Activated T-helper 2 cell treated with anti-CD3 and anti-CD28 coated beads, Interferon-gamma antibody, Interleukin-2, Interleukin-4, amounts not matched to agents 10 μg/mL and 5 μg/mL and 100 μg/mL, durations not matched to agents 14 hours and 24 hours and 36 hours (primary cell): ENCODE measurements at regions of chr12 and their contacts with region 1.

Region 1: GRCh38 chr12:124453419-124454351 is 113.7 kb downstream of the NCOR2 start:
- DNase-seq: peak; percentile 76
- H3K4me3 Mint-ChIP-seq: peak overlapping the region; percentile 51
- H3K27ac Mint-ChIP-seq: peak overlapping the region; percentile 67
- H3K4me1 Mint-ChIP-seq: peaks cover 35% of the 10 kb centered on the region
- H3K27me3 Mint-ChIP-seq: no peaks in the 10 kb centered on the region

Region 2: GRCh38 chr12:124388679-124389536 is 64.8 kb before region 1 on chr12:
- intact Hi-C with region 1: loop called (anchors 10 kb)
- DNase-seq: peak; percentile 43
- H3K4me3 Mint-ChIP-seq: peak overlapping the region; percentile 21
- H3K27ac Mint-ChIP-seq: no peak overlapping the region
- H3K4me1 Mint-ChIP-seq: peaks cover 22% of the 10 kb centered on the region
- H3K27me3 Mint-ChIP-seq: no peaks in the 10 kb centered on the region

Region 3: GRCh38 chr12:124441443-124442194 is 12.1 kb before region 1 on chr12:
- intact Hi-C with region 1: no loop called
- DNase-seq: no peak
- H3K4me3 Mint-ChIP-seq: no peak overlapping the region
- H3K27ac Mint-ChIP-seq: no peak overlapping the region
- H3K4me1 Mint-ChIP-seq: no peaks in the 10 kb centered on the region
- H3K27me3 Mint-ChIP-seq: no peaks in the 10 kb centered on the region

Region 4: DNA sequence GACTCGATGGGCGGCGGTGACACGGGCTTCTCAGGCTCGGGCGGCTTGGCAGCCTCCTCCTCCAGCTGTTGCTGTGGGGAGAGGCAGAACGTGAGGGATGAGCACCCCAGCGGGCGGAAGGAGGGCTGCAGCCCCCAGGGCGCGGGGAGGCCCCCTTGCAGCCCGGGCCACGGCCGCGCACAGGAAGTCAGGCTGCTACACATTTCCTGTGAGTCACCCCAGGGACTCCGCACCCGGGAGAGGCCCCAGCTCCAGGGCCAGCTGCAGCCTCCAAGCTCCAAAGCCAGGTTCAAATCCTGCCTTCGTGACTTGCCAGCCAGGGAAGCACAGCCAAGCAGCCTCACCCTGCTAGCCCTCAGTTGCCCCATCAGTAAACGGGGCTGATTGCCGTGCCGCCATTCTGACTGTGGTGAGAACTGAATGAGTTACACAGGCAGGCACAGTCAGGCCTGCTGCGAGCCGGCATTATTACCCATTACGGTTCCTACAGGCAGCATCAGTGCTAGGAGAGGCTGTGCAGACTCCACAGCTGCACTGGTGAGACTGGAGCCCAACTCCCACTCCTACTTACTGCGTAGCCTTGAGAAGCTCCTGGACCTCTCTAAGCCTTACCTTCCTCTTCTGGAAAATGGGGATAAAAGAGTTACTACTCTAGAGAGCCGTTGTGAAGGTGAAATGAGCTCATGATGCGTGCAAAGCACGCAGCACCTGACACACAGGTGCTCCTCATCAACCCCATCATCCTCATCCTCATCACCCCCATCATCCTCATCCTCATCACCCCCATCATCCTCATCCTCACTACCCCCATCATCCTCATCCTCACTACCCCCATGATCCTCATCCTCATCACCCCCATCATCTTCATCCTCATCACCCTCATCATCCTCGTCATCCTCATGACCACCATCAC is 12.8 kb after region 1 on chr12:
- intact Hi-C with region 1: loop called (anchors 1 kb)
- DNase-seq: peak; percentile 83
- H3K4me3 Mint-ChIP-seq: peak overlapping the region; percentile 60
- H3K27ac Mint-ChIP-seq: peak overlapping the region; percentile 74
- H3K4me1 Mint-ChIP-seq: peaks cover 36% of the 10 kb centered on the region
- H3K27me3 Mint-ChIP-seq: no peaks in the 10 kb centered on the region

Region 5: GRCh38 chr12:124493809-124494750 is 40.4 kb after region 1 on chr12:
- intact Hi-C with region 1: loop called (anchors 5 kb)
- DNase-seq: no peak
- H3K4me3 Mint-ChIP-seq: no peak overlapping the region
- H3K27ac Mint-ChIP-seq: peak overlapping the region; percentile 65
- H3K4me1 Mint-ChIP-seq: peaks cover 23% of the 10 kb centered on the region
- H3K27me3 Mint-ChIP-seq: no peaks in the 10 kb centered on the region

Region 6: DNA sequence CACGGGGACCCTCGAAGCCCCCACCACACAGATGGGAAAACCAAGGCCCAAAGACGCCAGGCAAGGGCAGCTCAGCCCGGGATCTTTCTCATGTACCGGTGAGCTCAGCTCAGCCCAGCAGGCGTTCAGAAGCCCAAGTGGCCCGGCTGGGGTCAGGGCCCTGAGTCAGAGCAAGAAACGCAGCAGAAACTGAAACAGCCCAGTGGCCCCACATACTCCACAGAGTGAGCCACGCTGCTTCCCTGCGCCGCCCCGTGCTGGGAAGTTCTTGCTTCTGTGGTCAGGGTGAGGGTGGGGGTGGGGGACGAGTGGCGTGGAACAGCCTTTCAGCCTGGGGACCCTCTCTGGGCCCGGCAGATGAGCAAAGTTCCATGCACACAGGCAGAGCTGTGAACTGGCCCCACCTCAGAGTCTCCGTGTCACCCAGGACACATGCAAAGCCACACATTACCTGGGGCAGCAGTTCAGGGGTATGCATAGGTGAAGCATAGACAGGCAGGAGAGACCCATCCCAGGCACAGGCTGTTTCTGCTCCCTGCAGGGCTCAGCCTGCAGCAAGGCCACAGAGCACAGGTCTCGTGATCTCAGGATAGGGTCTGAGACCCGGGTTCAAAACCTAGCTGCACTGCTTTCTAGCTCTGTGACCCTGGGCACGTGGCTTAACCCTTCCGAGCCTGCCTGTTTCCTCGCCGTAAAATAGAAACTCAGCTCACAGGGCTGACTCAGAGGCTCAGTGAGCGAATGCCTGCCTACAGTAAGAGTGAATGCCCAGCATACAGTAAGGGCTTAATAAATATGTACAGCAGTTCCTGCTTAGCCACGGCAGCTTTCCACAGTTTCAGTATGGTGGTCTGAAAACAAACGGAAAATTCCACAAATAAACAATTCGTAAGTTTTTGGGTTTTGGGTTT is 92.1 kb after region 1 on chr12:
- intact Hi-C with region 1: loop called (anchors 2 kb)
- DNase-seq: peak; percentile 54
- H3K4me3 Mint-ChIP-seq: peak overlapping the region; percentile 42
- H3K27ac Mint-ChIP-seq: no peak overlapping the region
- H3K4me1 Mint-ChIP-seq: peaks cover 41% of the 10 kb centered on the region
- H3K27me3 Mint-ChIP-seq: no peaks in the 10 kb centered on the region

Region 7: DNA sequence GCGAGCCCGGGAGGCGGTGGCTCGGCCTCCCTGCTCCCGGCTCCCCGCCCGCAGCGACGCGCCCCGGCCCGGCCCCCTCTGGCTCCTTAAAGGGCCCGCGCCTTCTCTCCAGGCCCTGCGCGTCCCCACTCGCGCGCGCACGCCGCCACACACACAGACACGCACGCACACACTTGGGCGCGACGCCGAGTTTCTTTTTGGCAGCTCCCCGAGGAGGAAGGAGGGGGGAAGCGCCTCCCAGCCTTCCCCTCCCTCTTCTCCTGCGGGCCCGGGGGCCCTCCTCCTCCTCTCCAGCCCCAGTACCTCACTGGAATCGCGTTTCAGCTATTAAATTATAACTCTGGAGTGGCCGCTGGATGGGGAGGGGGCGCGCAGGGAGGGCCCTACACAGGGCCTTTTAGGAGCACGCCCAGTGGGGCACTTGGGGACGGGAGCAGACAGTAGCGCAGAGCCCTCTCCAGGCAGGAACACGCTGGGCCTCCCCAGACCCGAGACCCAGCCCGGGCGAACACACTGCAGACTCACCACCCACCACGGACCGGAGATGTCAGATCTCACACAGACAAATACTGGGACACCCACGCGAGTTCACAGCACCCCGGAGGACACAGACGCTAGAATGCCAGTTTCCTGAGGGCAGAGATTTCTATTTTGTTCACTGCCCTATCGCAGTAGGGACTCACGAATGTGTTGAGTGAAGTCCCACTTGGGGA is 114.1 kb after region 1 on chr12:
- intact Hi-C with region 1: loop called (anchors 2 kb)
- DNase-seq: peak; percentile 75
- H3K4me3 Mint-ChIP-seq: peak overlapping the region; percentile 78
- H3K27ac Mint-ChIP-seq: peak overlapping the region; percentile 78
- H3K4me1 Mint-ChIP-seq: peaks cover 10% of the 10 kb centered on the region
- H3K27me3 Mint-ChIP-seq: peaks cover 3% of the 10 kb centered on the region

Region 8: GRCh38 chr12:124727264-124727721 is 273.6 kb after region 1 on chr12:
- intact Hi-C with region 1: no loop called
- DNase-seq: no peak
- H3K4me3 Mint-ChIP-seq: no peak overlapping the region
- H3K27ac Mint-ChIP-seq: no peak overlapping the region
- H3K4me1 Mint-ChIP-seq: no peaks in the 10 kb centered on the region
- H3K27me3 Mint-ChIP-seq: peaks cover 14% of the 10 kb centered on the region